ENCODE measurements at regions of chr17 and their contacts with region 1.

Region 1: GRCh38 chr17:34561333-34561732 is 18.0 kb upstream of the TMEM132E start:
- DNase-seq: no peak
- H3K4me3 ChIP-seq: no peak overlapping the region
- H3K4me3 Mint-ChIP-seq: peak overlapping the region in 1 of 2 donors; percentile 36
- H3K27ac ChIP-seq: no peak overlapping the region
- H3K27ac Mint-ChIP-seq: no peak overlapping the region
- H3K4me1 ChIP-seq: no peaks in the 10 kb centered on the region
- H3K4me1 Mint-ChIP-seq: no peaks in the 10 kb centered on the region
- H3K27me3 ChIP-seq: peaks cover 6% of the 10 kb centered on the region in 2 donors
- H3K27me3 Mint-ChIP-seq: peaks cover 9 to 11% (median 11%) of the 10 kb centered on the region in 3 donors
- CTCF ChIP-seq: no peak

Region 2: DNA sequence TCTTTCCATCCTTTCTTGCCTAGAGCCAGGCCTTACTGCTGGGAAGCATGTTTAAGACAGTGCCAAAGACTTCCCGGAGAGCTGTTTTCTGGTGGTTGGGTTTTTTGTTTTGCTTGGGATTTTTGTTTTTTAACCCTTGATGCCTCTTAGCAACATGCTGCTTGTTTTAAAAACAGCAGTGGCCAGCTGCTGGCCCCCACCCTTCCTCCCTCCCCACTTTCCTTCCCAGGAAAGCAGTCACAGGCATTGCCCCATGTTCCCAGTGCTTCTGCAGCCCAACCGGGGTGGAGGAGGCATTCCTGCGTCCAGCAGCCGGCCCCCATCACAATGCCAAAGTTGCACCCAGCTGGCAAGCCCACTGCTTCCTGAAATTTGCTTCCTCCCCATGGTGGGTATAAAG is 30.7 kb after region 1 on chr17:
- intact Hi-C with region 1: loop called in 1 of 2 experiments (anchors 2 kb)
- DNase-seq: no peak
- H3K4me3 ChIP-seq: no peak overlapping the region
- H3K4me3 Mint-ChIP-seq: no peak overlapping the region
- H3K27ac ChIP-seq: no peak overlapping the region
- H3K27ac Mint-ChIP-seq: no peak overlapping the region
- H3K4me1 ChIP-seq: no peaks in the 10 kb centered on the region
- H3K4me1 Mint-ChIP-seq: no peaks in the 10 kb centered on the region
- H3K27me3 ChIP-seq: peaks cover 2 to 5% of the 10 kb centered on the region in 2 donors
- H3K27me3 Mint-ChIP-seq: peaks cover 15 to 47% (median 27%) of the 10 kb centered on the region in 3 donors
- CTCF ChIP-seq: no peak

Region 3: GRCh38 chr17:35265566-35266141 is 704.3 kb after region 1 on chr17:
- intact Hi-C with region 1: no loop called
- DNase-seq: no peak
- H3K4me3 ChIP-seq: no peak overlapping the region
- H3K4me3 Mint-ChIP-seq: no peak overlapping the region
- H3K27ac ChIP-seq: no peak overlapping the region
- H3K27ac Mint-ChIP-seq: no peak overlapping the region
- H3K4me1 ChIP-seq: peaks cover 3 to 5% of the 10 kb centered on the region in 2 donors
- H3K4me1 Mint-ChIP-seq: peaks cover 2% of the 10 kb centered on the region
- H3K27me3 ChIP-seq: no peaks in the 10 kb centered on the region
- H3K27me3 Mint-ChIP-seq: peaks cover 0 to 2% (median 2%) of the 10 kb centered on the region in 3 donors
- CTCF ChIP-seq: no peak